GM10248 (cell line): ENCODE measurements at regions of chr7 and their contacts with region 1.

Region 1: GRCh38 chr7:69803699-69804516 is 205.6 kb downstream of the AUTS2 start:
- DNase-seq: peak; percentile 65
- CTCF ChIP-seq: no peak

Region 2: DNA sequence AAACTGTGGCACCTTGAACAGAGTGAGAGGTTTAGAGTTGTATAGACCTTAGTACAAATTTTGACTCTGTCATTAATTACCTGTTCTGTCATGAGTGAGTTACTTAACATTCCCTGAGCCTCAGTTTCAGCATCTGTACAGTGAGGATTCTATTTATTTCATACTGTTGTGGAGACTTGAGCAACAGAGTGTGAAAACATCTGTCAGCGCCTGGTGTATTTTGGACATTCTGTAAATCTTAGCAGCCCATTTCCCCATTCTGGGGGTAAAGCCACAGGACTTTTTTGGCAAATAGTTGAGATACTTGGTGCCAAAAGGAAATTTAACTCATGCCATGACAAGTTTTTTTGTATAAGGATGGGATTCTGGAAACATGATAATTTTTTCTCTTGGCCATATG is 110.9 kb before region 1 on chr7:
- CTCF ChIA-PET with region 1: no interaction called
- POLR2A ChIA-PET with region 1: no interaction called
- DNase-seq: no peak
- CTCF ChIP-seq: no peak

Region 3: GRCh38 chr7:70133961-70134770 is 330.3 kb after region 1 on chr7:
- CTCF ChIA-PET with region 1: no interaction called
- POLR2A ChIA-PET with region 1: interaction called, 19 read pairs
- DNase-seq: no peak
- CTCF ChIP-seq: no peak